ENCODE measurements at regions of chr15 and their contacts with region 1.

Region 1: DNA sequence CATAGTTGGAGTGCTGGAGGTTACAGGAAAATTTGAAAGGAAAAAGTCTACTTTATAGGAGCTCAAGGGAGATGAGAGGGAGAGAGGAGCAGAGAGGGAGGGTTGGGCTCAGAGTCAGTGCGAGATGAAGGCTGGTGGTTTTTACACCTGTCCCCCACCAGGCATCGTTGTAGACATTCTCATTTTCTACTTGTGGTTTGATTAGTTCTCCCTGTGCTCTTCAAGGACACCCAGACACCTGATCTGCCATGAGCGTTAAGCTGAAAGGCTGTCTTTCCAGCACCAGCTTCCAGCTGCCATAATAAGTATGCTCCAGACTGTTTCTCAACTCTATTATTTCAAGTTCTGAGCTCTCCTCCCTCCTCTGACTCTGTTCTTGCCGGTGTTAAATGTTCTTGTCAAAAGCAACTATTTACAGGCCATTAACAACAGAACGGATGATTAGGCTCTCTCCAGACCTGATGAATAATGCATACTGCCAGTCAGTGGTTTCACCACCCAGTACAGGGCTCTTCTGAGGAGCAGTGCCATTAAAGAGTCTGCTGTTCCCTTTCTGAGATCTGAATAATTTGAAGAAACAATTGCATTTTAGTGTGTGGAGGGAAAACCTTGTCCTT is 514.6 kb upstream of the MCTP2 start:
- DNase-seq: no peak
- ATAC-seq: no peak
- H3K4me3 ChIP-seq: no peak overlapping the region
- H3K27ac ChIP-seq: no peak overlapping the region
- H3K4me1 ChIP-seq: no peaks in the 10 kb centered on the region
- H3K27me3 ChIP-seq: no peaks in the 10 kb centered on the region
- CTCF ChIP-seq: no peak
- EP300 ChIP-seq: no peak
- POLR2A ChIP-seq: no peak
- RAD21 ChIP-seq: no peak

Region 2: GRCh38 chr15:93656040-93656439 is 60.7 kb before region 1 on chr15:
- CTCF ChIA-PET with region 1: no interaction called
- POLR2A ChIA-PET with region 1: no interaction called
- RAD21 ChIA-PET with region 1: no interaction called
- SMC1A ChIA-PET with region 1: no interaction called
- in situ Hi-C with region 1: no loop called
- intact Hi-C with region 1: loop called (anchors 10 kb)
- DNase-seq: no peak
- ATAC-seq: no peak
- H3K4me3 ChIP-seq: no peak overlapping the region
- H3K27ac ChIP-seq: no peak overlapping the region
- H3K4me1 ChIP-seq: no peaks in the 10 kb centered on the region
- H3K27me3 ChIP-seq: no peaks in the 10 kb centered on the region
- CTCF ChIP-seq: no peak
- EP300 ChIP-seq: no peak
- POLR2A ChIP-seq: no peak
- RAD21 ChIP-seq: no peak

Region 3: DNA sequence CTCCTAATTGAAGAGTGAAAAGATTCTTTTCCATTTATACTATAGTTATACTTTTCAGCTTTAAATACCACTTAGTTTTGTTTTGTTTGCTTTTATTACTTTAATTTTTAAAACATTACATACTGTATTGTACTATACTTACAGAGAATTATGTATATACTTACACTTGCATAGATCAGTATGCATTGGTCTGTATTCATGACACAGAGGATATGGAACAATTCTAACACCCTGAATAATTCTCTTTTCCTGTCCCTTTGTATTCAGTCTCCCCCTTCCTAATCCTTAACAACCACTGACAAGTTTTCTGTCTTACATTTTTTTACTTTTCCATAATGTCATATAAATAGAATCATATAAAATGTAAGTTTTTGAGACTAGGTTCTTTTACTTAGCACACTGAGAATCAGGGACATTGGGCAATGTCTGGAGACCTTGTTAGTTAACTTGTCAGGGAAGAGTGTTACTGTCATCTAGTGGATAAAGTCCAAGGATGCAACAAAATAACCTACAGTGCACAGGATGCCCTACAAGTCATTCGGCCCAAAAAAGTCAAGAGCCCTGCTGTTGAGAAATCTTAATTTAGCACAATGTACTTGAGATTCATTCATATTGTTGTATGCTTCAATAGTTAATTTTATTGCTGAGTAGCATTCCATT is 418.9 kb after region 1 on chr15:
- CTCF ChIA-PET with region 1: no interaction called
- POLR2A ChIA-PET with region 1: no interaction called
- RAD21 ChIA-PET with region 1: no interaction called
- SMC1A ChIA-PET with region 1: no interaction called
- in situ Hi-C with region 1: no loop called
- intact Hi-C with region 1: no loop called
- DNase-seq: no peak
- ATAC-seq: no peak
- H3K4me3 ChIP-seq: no peak overlapping the region
- H3K27ac ChIP-seq: no peak overlapping the region
- H3K4me1 ChIP-seq: no peaks in the 10 kb centered on the region
- H3K27me3 ChIP-seq: no peaks in the 10 kb centered on the region; a peak in 1 of 4 replicates
- CTCF ChIP-seq: no peak
- EP300 ChIP-seq: no peak
- POLR2A ChIP-seq: no peak
- RAD21 ChIP-seq: 0 out of 2 replicates have a peak, but pooled peaks have one; percentile 16